Ovary (tissue), 10 donors: ENCODE measurements at regions of chr20 and their contacts with region 1.

Region 1: GRCh38 chr20:33674295-33675135 is at the start of gene NECAB3:
- DNase-seq: peak; percentile 87 to 95 (median 90)
- H3K4me3 ChIP-seq: peak within 1 kb of the TSS; percentile 77
- H3K27ac ChIP-seq: peak within 1 kb of the TSS; percentile 93 to 97
- H3K4me1 ChIP-seq: peaks cover 37% of the 10 kb centered on the region
- H3K27me3 ChIP-seq: no peaks in the 10 kb centered on the region
- CTCF ChIP-seq: peak in 1 of 3 donors; percentile 10
- EP300 ChIP-seq: no peak
- POLR2A ChIP-seq: peak; percentile 66
- total RNA-seq, gene NECAB3: 74.3 to 166 (median 103) TPM

Region 2: DNA sequence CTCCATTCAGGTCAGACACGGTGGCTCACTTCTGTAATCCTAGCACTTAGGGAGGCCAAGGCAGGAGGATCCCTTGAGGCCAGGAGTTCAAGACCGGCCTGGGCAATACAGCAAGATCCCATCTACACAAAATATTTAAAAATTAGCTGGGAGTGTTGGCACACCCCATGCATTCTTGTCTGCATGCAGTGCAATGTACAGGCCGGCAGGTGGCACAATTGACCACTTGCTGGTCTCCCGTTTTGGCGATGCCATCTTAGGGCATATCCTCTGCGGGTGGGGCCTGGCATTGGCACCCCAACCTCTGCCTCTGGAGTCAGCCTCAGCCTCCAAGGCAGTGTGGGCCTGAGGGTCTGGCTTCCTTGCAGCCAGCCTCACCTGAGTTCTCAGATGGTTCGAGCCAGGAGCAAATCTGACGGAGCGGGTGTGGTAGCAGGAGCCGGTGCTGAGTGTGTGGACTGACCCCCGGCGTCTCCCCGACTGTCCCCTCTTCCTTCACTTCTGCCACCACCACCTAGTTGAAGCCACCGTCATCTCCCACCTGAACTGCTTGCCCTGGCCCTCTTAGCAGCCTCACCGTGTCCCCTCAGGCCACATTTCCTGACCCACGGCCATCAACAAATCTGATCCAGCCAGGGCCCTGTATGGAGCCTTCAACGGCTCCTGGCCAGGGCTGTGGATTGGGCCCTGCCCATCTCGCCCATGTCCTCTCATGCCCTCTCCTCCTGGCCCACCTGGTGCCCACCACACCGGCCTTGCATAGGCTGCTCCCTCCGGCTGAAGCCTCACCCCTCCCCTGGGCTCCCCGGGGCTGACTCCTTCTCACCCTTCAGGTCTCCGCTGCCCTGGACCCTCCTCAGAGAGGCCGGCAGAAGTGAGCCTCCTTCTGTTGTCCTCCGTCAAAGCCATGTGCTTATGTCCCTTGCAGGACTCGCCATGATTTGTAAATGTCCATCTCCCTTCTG is 771.8 kb before region 1 on chr20:
- intact Hi-C with region 1: no loop called
- DNase-seq: peak in 2 of 5 donors; percentile 23 to 48
- H3K4me3 ChIP-seq: no peak overlapping the region
- H3K27ac ChIP-seq: no peak overlapping the region
- H3K4me1 ChIP-seq: no peaks in the 10 kb centered on the region
- H3K27me3 ChIP-seq: no peaks in the 10 kb centered on the region
- CTCF ChIP-seq: peak in 2 of 3 donors; percentile 14 to 32
- EP300 ChIP-seq: no peak
- POLR2A ChIP-seq: no peak

Region 3: GRCh38 chr20:33606118-33606771 is 68.3 kb before region 1 on chr20:
- intact Hi-C with region 1: no loop called
- DNase-seq: no peak
- H3K4me3 ChIP-seq: no peak overlapping the region
- H3K27ac ChIP-seq: no peak overlapping the region
- H3K4me1 ChIP-seq: no peaks in the 10 kb centered on the region
- H3K27me3 ChIP-seq: no peaks in the 10 kb centered on the region
- CTCF ChIP-seq: no peak
- EP300 ChIP-seq: no peak
- POLR2A ChIP-seq: no peak

Region 4: GRCh38 chr20:33731693-33732165 is 57.2 kb after region 1 on chr20 and contains the start of gene ZNF341:
- intact Hi-C with region 1: loop called in 3 of 4 experiments (anchors 5 to 10 kb)
- DNase-seq: peak; percentile 91 to 96 (median 93)
- H3K4me3 ChIP-seq: peak within 1 kb of the TSS; percentile 37
- H3K27ac ChIP-seq: peak within 1 kb of the TSS; percentile 51 to 95
- H3K4me1 ChIP-seq: peaks cover 13% of the 10 kb centered on the region
- H3K27me3 ChIP-seq: no peaks in the 10 kb centered on the region
- CTCF ChIP-seq: peak; percentile 96 to 99 (median 96)
- EP300 ChIP-seq: no peak
- POLR2A ChIP-seq: no peak
- total RNA-seq, gene ZNF341: 1.2 to 3.8 (median 1.6) TPM

Region 5: DNA sequence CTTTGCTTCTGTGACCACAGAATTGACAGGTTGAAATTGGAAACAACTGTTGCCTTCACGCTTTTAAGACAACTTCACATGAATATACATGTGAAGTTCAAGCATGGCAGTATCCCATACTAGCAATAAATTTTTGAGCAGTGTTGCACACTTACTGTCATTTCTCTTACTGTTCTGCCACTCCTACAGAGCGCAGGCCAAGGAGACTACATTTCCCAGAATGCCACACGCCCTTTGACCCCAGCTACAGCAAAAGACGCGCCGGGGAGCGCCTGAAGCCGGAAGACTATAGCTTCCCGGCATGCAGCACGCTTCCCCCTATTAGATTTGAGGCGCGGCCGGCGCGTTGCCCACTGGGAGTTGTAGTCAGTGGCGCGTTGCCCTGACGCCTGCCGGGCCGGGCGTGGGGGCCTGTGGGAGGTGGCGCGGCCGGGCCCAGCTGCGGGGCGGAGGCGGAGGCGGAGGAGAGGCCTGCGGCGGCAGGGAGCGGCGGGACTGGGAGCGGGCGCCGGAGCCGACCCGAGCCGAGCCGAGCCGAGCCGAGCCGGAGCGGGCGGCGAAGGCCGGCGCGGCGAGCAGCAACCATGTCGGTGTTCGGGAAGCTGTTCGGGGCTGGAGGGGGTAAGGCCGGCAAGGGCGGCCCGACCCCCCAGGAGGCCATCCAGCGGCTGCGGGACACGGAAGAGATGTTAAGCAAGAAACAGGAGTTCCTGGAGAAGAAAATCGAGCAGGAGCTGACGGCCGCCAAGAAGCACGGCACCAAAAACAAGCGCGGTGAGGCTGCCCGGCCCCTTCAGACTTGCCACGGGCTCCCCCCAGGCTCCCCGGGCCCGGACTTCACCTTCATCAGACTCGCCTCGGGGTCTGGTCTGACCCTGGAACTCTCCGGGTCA is 136.6 kb after region 1 on chr20 and contains the start of gene CHMP4B:
- intact Hi-C with region 1: loop called in 1 of 4 experiments (anchors 10 kb)
- DNase-seq: peak; percentile 99 to 100 (median 100)
- H3K4me3 ChIP-seq: peak within 1 kb of the TSS; percentile 91
- H3K27ac ChIP-seq: peak within 1 kb of the TSS; percentile 83 to 91
- H3K4me1 ChIP-seq: peaks cover 12% of the 10 kb centered on the region
- H3K27me3 ChIP-seq: no peaks in the 10 kb centered on the region
- CTCF ChIP-seq: no peak
- EP300 ChIP-seq: peak; percentile 80
- POLR2A ChIP-seq: peak; percentile 86
- total RNA-seq, gene CHMP4B: 48.5 to 99.1 (median 96.7) TPM